ENCODE measurements at regions of chr18 and their contacts with region 1.

Region 1: GRCh38 chr18:47215554-47216138 is 35.8 kb downstream of the SKOR2 start:
- DNase-seq: peak in 3 of 4 donors; percentile 12 to 23 (median 17)
- ATAC-seq: no peak
- H3K4me3 ChIP-seq: no peak overlapping the region
- H3K27ac ChIP-seq: no peak overlapping the region
- H3K4me1 ChIP-seq: no peaks in the 10 kb centered on the region
- H3K27me3 ChIP-seq: no peaks in the 10 kb centered on the region
- CTCF ChIP-seq: peak in 6 of 7 experiments; percentile 41 to 77 (median 64)
- POLR2A ChIP-seq: no peak

Region 2: DNA sequence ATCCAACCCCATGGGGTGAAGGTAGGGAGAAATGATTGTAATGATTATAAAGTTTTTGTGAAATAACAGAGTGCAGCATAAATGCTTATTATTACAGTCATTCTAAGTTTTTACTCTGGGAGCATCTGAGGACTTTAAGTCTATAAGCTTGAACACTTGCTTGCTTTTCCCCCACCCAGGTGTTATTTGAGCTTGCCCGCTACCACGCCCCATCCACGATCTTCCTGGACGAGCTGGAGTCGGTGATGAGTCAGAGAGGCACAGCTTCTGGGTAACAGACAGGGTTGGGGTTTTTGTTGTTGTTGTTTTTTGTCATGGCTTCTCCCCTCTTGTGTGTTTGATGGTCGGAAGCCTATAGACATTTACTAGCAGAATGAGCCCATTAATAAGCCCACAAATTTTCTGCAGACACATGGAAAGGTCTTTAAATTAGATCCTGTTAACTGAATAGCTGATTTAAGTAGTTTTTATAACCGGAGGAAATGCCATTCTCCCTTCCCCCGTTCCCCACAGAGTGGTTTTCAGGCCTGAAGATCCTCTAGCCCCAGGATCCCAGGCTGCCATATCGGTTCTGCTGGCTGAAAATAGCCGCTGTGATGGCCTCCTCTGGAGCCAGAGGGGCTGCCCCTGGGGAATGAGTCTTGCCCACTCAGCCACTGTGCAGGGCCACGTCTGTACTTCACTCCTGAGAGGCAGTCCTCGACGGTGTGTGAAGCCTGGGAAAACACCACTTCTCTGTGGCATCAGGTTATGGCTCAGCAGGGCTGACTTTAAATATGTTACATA is 140.4 kb before region 1 on chr18:
- intact Hi-C with region 1: no loop called
- DNase-seq: no peak
- ATAC-seq: no peak
- H3K4me3 ChIP-seq: no peak overlapping the region
- H3K27ac ChIP-seq: no peak overlapping the region
- H3K4me1 ChIP-seq: no peaks in the 10 kb centered on the region
- H3K27me3 ChIP-seq: no peaks in the 10 kb centered on the region
- CTCF ChIP-seq: no peak
- POLR2A ChIP-seq: no peak

Region 3: DNA sequence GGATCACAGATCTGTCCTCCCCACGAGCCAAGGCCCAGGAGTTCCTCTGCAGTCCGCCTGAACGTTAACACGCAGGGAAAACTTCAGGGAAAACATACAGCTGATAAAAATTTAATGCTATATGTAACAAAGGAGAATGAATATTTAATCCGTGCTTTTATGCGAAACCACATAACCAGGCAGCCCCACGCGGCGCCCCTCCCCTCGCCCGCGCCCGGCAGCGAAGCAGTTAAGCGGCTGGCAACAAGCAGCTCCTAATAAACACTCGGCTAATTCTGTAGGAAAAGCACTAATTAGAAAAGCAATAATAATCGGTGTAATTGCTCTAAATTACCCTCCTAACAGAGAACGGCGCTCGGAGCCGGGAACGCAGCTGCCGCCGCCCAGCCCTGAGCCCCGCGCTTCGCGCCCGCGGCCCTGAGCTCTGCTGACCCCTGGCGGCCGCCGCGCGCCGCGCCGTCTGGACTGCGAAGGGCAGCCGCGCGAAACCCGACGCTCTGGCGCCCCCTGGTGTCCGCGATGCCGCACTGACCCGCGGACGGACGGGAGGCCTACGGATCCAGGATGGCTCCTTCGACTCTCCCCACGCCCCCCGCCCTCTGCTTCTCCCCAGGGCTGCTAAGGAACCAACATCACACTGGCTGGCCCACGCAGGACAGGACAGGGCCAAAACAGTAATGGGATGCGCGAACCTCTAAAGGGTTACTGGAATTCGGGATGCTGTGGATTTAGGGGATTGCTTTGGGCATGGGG is 533.4 kb after region 1 on chr18:
- intact Hi-C with region 1: loop called (anchors 5 kb)
- DNase-seq: peak; percentile 67 to 85 (median 78)
- ATAC-seq: peak; percentile 96
- H3K4me3 ChIP-seq: no peak overlapping the region
- H3K27ac ChIP-seq: no peak overlapping the region
- H3K4me1 ChIP-seq: peaks cover 5% of the 10 kb centered on the region
- H3K27me3 ChIP-seq: no peaks in the 10 kb centered on the region
- CTCF ChIP-seq: peak; percentile 91 to 100 (median 100)
- POLR2A ChIP-seq: no peak